ENCODE measurements at regions of chr13 and their contacts with region 1.

Region 1: GRCh38 chr13:48448959-48449614 is 36.2 kb upstream of the LPAR6 start:
- DNase-seq: no peak
- H3K4me3 ChIP-seq: peak overlapping the region in 1 of 3 experiments; percentile 23
- H3K27ac ChIP-seq: peak overlapping the region; percentile 3
- H3K4me1 ChIP-seq: peaks cover 41% of the 10 kb centered on the region
- H3K27me3 ChIP-seq: no peaks in the 10 kb centered on the region
- CTCF ChIP-seq: no peak
- POLR2A ChIP-seq: no peak

Region 2: GRCh38 chr13:48400850-48401291 is 48.2 kb before region 1 on chr13:
- CTCF ChIA-PET with region 1: interaction called, 5 read pairs
- POLR2A ChIA-PET with region 1: no interaction called
- dilution Hi-C with region 1: no loop called
- intact Hi-C with region 1: loop called (anchors 2 kb)
- DNase-seq: peak; percentile 96
- H3K4me3 ChIP-seq: peak overlapping the region in 1 of 3 experiments; percentile 26
- H3K27ac ChIP-seq: peak overlapping the region; percentile 75
- H3K4me1 ChIP-seq: peaks cover 44% of the 10 kb centered on the region
- H3K27me3 ChIP-seq: no peaks in the 10 kb centered on the region
- CTCF ChIP-seq: no peak
- POLR2A ChIP-seq: no peak

Region 3: GRCh38 chr13:48437371-48437770 is 11.7 kb before region 1 on chr13:
- CTCF ChIA-PET with region 1: no interaction called
- POLR2A ChIA-PET with region 1: no interaction called
- dilution Hi-C with region 1: no loop called
- intact Hi-C with region 1: loop called (anchors 1 kb)
- DNase-seq: peak; percentile 82
- H3K4me3 ChIP-seq: no peak overlapping the region
- H3K27ac ChIP-seq: no peak overlapping the region
- H3K4me1 ChIP-seq: peaks cover 21% of the 10 kb centered on the region
- H3K27me3 ChIP-seq: no peaks in the 10 kb centered on the region
- CTCF ChIP-seq: no peak
- POLR2A ChIP-seq: no peak

Measured in endothelial cell of umbilical vein (primary cell).